ENCODE measurements at regions of chr22 and their contacts with region 1.

Region 1: DNA sequence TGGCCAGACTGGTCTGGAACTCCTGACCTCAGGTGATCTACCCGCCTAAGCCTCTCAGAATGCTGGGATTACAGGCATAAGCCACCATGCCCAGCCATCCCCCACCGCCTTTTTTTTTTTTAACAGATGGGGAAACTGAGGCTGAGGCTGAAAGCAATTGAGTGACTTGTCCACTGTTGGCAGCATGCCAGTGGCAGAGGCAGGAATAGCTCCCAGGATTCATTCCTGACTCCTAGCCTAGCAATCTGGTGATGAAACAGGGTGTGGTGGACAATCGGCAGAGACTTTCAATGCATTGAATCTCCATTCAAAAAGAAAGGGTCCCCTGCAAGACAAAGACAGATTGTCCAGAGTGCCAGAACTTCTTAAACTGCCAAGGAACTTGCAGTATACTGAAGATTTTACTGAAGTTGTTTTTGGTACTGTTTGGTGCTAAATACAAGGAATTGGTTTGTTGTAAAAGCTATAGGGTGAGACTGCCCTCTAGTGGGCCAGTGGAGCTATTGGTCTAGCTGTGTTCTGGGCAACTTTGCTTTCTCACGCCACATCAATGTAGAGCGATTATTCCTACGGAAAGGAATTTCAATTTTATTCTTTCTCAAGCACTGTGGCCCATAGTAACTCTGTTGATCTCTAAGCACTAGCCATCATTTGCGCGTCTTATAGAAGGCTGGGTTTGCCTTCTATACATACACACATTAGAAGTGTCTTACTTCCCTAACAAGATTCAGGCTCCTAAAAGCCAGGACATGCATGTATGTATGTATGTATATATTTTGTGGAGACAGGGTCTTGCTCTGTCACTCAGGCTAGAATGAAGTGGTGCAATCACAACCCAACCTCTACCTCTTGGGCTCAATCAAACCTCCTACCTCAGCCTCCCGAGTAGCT is 21.0 kb downstream of the C22orf31 start:
- DNase-seq: peak; percentile 60 to 83
- H3K4me3 ChIP-seq: no peak overlapping the region
- H3K27ac ChIP-seq: no peak overlapping the region
- H3K4me1 ChIP-seq: peaks cover 4 to 7% of the 10 kb centered on the region in 2 donors
- H3K27me3 ChIP-seq: no peaks in the 10 kb centered on the region
- CTCF ChIP-seq: peak; percentile 95 to 97 (median 96)
- POLR2A ChIP-seq: no peak

Region 2: DNA sequence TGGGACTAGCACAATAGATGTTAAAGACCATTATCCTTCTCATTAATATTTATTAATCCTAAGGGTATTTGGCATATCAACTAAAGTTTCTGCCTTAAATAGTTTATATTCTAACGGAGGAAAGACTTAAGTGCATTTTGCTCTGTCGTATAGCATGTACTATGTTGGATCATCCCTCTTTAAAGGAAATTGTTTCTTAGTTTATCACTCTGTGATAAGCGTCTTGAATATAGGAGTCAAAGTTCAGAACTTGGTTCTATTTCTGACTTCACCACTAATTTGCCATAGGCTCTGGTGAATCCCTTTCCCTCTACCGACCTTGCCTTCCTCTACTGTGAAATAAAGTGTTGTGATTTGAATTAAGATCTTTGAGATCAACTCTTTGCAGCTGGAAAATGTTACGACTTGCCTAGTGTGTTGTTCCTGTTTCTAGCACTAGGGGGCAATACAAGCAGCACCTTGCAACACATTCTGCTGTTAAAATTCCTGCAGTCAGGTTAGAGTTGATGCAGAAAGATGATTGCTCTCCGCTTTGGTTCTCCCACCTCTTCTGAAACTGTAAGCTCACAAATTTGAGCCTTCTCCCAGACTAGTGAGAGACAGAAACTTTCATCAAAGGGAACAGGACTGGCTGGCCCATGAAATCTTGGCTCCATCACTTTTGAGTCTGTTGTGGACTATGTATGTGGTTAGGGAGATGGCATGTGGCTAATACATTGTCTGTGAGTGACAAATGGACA is 185.1 kb before region 1 on chr22:
- intact Hi-C with region 1: loop called (anchors 2 kb)
- DNase-seq: peak; percentile 30 to 64
- H3K4me3 ChIP-seq: no peak overlapping the region
- H3K27ac ChIP-seq: no peak overlapping the region
- H3K4me1 ChIP-seq: no peaks in the 10 kb centered on the region
- H3K27me3 ChIP-seq: no peaks in the 10 kb centered on the region
- CTCF ChIP-seq: peak; percentile 87 to 99 (median 92)
- POLR2A ChIP-seq: no peak

Measured in uterus (tissue), 4 donors.